ENCODE measurements at regions of chrX and their contacts with region 1.

Region 1: DNA sequence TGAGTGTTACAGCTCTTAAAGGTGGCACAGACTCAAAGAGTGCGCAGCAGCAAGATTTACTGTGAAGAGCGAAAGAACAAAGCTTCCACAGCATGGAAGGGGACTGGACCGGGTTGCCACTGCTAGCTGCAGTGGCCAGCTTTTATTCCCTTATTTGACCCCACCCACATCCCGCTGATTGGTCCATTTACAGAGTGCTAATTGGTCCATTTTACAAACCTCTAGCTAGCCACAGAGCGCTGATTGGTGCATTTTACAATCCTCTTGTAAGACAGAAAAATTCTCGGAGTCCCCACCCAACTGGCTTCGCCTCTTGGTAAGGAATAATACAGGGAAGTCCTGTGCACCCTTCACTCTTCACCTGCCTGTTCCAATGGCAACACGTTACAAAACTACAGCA is 1.9 kb upstream of the SHROOM2 start:
- DNase-seq: no peak
- H3K4me3 ChIP-seq: no peak overlapping the region
- H3K27ac ChIP-seq: no peak overlapping the region
- H3K4me1 ChIP-seq: peaks cover 0 to 12% (median 8%) of the 10 kb centered on the region in 4 experiments
- H3K27me3 ChIP-seq: peaks cover 8 to 76% (median 26%) of the 10 kb centered on the region in 5 experiments

Region 2: GRCh38 chrX:9765072-9765736 is 19.1 kb before region 1 on chrX:
- CTCF ChIA-PET with region 1: no interaction called
- POLR2A ChIA-PET with region 1: no interaction called
- DNase-seq: no peak
- H3K4me3 ChIP-seq: peak overlapping the region in 1 of 7 experiments; percentile 28
- H3K27ac ChIP-seq: no peak overlapping the region
- H3K4me1 ChIP-seq: peaks cover 0 to 7% (median 1%) of the 10 kb centered on the region in 4 experiments
- H3K27me3 ChIP-seq: peaks cover 3 to 63% (median 19%) of the 10 kb centered on the region in 5 experiments

Region 3: DNA sequence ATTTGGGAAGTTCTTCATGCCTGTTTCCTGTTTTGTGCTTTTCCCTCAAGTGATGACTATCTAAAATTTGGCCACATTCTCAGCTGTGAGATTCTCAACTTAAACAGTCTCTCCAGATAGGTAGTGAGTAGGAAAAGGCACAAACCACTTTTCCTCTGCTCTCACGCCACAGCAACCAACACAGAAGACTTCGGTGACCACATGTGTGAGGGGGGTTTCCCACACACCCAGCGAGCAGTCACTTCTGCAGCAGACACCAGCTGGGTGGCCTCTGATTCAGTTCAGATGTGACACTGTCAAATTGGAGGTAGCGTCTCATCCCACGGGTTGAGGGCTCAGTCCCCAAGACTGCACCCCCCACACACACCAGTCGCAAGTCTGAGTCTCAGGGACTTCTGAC is 157.8 kb after region 1 on chrX:
- CTCF ChIA-PET with region 1: no interaction called
- POLR2A ChIA-PET with region 1: interaction called, 10 read pairs
- DNase-seq: peak; percentile 85 to 95 (median 95)
- H3K4me3 ChIP-seq: no peak overlapping the region
- H3K27ac ChIP-seq: no peak overlapping the region
- H3K4me1 ChIP-seq: peaks cover 0 to 34% (median 20%) of the 10 kb centered on the region in 4 experiments
- H3K27me3 ChIP-seq: no peaks in the 10 kb centered on the region